ENCODE measurements at regions of chr9 and their contacts with region 1.

Region 1: GRCh38 chr9:71748280-71748743 is 20.0 kb downstream of the CEMIP2 start:
- DNase-seq: no peak
- H3K4me3 Mint-ChIP-seq: no peak overlapping the region
- H3K27ac Mint-ChIP-seq: no peak overlapping the region
- H3K4me1 Mint-ChIP-seq: peaks cover 5% of the 10 kb centered on the region
- H3K27me3 Mint-ChIP-seq: no peaks in the 10 kb centered on the region
- CTCF ChIP-seq: no peak

Region 2: GRCh38 chr9:71431931-71432330 is 316.4 kb before region 1 on chr9:
- CTCF ChIA-PET with region 1: no interaction called
- POLR2A ChIA-PET with region 1: no interaction called
- intact Hi-C with region 1: no loop called
- DNase-seq: no peak
- H3K4me3 Mint-ChIP-seq: no peak overlapping the region
- H3K27ac Mint-ChIP-seq: no peak overlapping the region
- H3K4me1 Mint-ChIP-seq: no peaks in the 10 kb centered on the region
- H3K27me3 Mint-ChIP-seq: peaks cover 13% of the 10 kb centered on the region
- CTCF ChIP-seq: no peak

Region 3: DNA sequence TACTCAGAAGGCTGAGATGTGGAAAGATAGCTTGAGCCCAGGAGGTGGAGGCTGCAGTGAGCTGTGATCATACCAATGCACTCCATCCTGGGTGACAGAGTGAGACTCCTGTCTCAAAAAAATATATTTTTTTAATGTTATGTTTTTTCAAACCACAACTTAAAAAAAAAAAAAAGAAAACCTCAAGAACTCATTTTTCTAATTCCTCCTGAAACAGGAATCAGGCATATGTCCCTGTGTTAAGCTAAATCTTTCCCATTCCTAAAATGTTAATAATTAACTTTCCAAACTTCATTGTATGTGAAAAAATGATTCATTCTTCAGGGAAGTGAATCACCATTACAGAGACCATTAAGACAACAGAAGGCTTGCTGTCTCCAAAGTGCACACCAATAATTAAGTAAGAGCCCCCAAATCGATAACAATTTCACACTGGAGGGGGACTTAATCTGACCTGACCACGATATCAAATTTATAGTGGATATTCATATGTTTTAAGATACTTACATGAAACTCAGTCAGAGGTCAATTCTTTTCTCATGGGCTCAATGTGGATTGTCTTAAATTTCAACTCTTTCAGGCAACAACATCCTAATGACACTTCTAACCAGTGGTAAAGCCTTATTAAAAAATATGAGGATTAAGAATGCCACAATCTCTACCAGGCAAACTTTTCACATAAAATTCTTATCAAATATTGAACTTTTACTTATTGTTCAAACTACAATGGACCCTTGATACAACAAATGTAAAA is 14.8 kb after region 1 on chr9:
- CTCF ChIA-PET with region 1: interaction called, 10 read pairs
- POLR2A ChIA-PET with region 1: interaction called, 7 read pairs
- intact Hi-C with region 1: no loop called
- DNase-seq: peak; percentile 24
- H3K4me3 Mint-ChIP-seq: no peak overlapping the region
- H3K27ac Mint-ChIP-seq: no peak overlapping the region
- H3K4me1 Mint-ChIP-seq: peaks cover 51% of the 10 kb centered on the region
- H3K27me3 Mint-ChIP-seq: no peaks in the 10 kb centered on the region
- CTCF ChIP-seq: no peak

Measured in MCF 10A (cell line).